ENCODE measurements at regions of chr12 and their contacts with region 1.

Region 1: GRCh38 chr12:46661110-46661845 is 164.5 kb downstream of the SLC38A4 start:
- DNase-seq: no peak
- H3K4me3 ChIP-seq: no peak overlapping the region
- H3K27ac ChIP-seq: peak overlapping the region; percentile 79
- H3K4me1 ChIP-seq: peaks cover 49% of the 10 kb centered on the region
- H3K27me3 ChIP-seq: no peaks in the 10 kb centered on the region
- CTCF ChIP-seq: peak; percentile 92

Region 2: DNA sequence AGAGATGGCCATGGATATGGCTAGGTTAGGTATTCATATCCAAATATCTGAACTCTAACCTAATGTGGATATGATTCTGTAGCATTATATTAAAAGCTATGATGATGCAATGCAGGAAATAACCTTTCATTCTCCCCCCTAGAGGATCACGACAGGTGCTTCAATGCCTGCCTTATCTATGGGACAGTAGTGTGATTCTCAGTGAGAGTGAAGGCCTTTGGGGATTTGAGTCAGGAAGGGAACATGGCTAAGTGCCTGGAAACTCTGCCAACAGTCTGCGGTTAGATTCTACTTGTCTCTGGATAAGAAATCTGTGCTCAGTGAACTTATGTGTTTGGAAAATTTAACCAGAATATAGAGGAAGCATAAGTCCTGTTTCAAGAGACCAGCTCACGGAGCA is 474.3 kb before region 1 on chr12:
- intact Hi-C with region 1: no loop called
- DNase-seq: peak; percentile 39
- H3K4me3 ChIP-seq: no peak overlapping the region
- H3K27ac ChIP-seq: no peak overlapping the region
- H3K4me1 ChIP-seq: peaks cover 18% of the 10 kb centered on the region
- H3K27me3 ChIP-seq: no peaks in the 10 kb centered on the region
- CTCF ChIP-seq: no peak

Region 3: GRCh38 chr12:46364777-46365580 is 296.3 kb before region 1 on chr12:
- intact Hi-C with region 1: loop called (anchors 10 kb)
- DNase-seq: no peak
- H3K4me3 ChIP-seq: peak overlapping the region; percentile 94
- H3K27ac ChIP-seq: peak overlapping the region; percentile 98
- H3K4me1 ChIP-seq: peaks cover 100% of the 10 kb centered on the region
- H3K27me3 ChIP-seq: no peaks in the 10 kb centered on the region
- CTCF ChIP-seq: no peak

Region 4: GRCh38 chr12:46473634-46474329 is 187.5 kb before region 1 on chr12:
- intact Hi-C with region 1: loop called (anchors 10 kb)
- DNase-seq: peak; percentile 64
- H3K4me3 ChIP-seq: peak overlapping the region; percentile 7
- H3K27ac ChIP-seq: peak overlapping the region; percentile 91
- H3K4me1 ChIP-seq: peaks cover 46% of the 10 kb centered on the region
- H3K27me3 ChIP-seq: no peaks in the 10 kb centered on the region
- CTCF ChIP-seq: no peak

Region 5: GRCh38 chr12:47844274-47845019 is 1183.2 kb after region 1 on chr12:
- intact Hi-C with region 1: no loop called
- DNase-seq: no peak
- H3K4me3 ChIP-seq: no peak overlapping the region
- H3K27ac ChIP-seq: no peak overlapping the region
- H3K4me1 ChIP-seq: no peaks in the 10 kb centered on the region
- H3K27me3 ChIP-seq: no peaks in the 10 kb centered on the region
- CTCF ChIP-seq: no peak